HepG2 (cell line): ENCODE measurements at regions of chr2 and their contacts with region 1.

Region 1: DNA sequence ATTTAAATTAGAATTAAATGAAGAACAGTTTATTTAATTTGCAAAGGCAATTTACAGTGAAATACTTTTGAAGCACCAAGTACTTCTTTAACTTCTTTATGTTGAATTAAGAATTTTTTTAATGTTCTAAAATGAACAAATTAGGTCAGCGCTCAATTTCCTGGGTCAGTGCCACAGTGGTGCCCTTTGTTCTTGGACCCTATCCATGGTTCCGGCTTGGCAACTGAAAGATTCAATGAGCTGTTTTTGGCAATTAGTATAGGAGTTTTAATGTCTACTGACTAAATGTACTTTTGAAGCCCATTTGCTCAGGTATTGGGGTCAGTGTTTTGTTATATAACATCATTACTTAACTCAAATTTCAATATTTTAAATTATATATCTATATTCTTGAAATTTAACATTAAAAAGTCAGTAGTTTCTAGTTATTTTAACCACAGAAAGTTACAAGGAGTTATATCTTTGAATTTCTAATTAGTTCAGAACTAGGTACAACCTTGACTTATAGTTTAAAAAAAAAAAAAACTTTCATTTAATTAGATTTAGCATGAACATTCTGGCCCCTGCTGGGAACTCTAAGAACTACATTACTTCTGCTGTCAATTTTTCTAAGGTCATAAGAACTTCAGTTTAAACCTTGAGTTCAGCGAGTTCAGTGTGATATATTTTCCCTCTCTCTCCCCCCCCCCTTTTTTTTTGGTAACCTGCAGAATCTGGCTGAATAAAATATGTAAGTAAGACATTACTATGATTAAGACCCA is 7.6 kb upstream of the MSTN start:
- DNase-seq: peak; percentile 68
- ATAC-seq: peak; percentile 44
- H3K4me3 ChIP-seq: no peak overlapping the region
- H3K27ac ChIP-seq: no peak overlapping the region
- H3K4me1 ChIP-seq: no peaks in the 10 kb centered on the region
- H3K27me3 ChIP-seq: no peaks in the 10 kb centered on the region
- CTCF ChIP-seq: peak; percentile 58
- EP300 ChIP-seq: no peak
- POLR2A ChIP-seq: no peak
- RAD21 ChIP-seq: no peak

Region 2: GRCh38 chr2:189751080-189751658 is 318.9 kb before region 1 on chr2:
- CTCF ChIA-PET with region 1: interaction called, 17 read pairs
- POLR2A ChIA-PET with region 1: no interaction called
- in situ Hi-C with region 1: loop called (anchors 10 kb)
- intact Hi-C with region 1: loop called (anchors 1 kb)
- DNase-seq: peak; percentile 54
- ATAC-seq: peak; percentile 98
- H3K4me3 ChIP-seq: no peak overlapping the region
- H3K27ac ChIP-seq: no peak overlapping the region
- H3K4me1 ChIP-seq: no peaks in the 10 kb centered on the region
- H3K27me3 ChIP-seq: no peaks in the 10 kb centered on the region
- CTCF ChIP-seq: peak; percentile 84
- EP300 ChIP-seq: 0 out of 4 replicates have a peak, but pooled peaks of 1 of the 2 experiments have one; percentile 8
- POLR2A ChIP-seq: no peak
- RAD21 ChIP-seq: 0 out of 2 replicates have a peak, but pooled peaks have one; percentile 14

Region 3: GRCh38 chr2:189798312-189799029 is 271.6 kb before region 1 on chr2:
- CTCF ChIA-PET with region 1: no interaction called
- POLR2A ChIA-PET with region 1: no interaction called
- in situ Hi-C with region 1: loop called (anchors 10 kb)
- intact Hi-C with region 1: loop called (anchors 2 kb)
- DNase-seq: peak; percentile 24
- ATAC-seq: peak; percentile 72
- H3K4me3 ChIP-seq: no peak overlapping the region
- H3K27ac ChIP-seq: no peak overlapping the region
- H3K4me1 ChIP-seq: no peaks in the 10 kb centered on the region
- H3K27me3 ChIP-seq: no peaks in the 10 kb centered on the region
- CTCF ChIP-seq: peak; percentile 47
- EP300 ChIP-seq: no peak
- POLR2A ChIP-seq: no peak
- RAD21 ChIP-seq: no peak

Region 4: GRCh38 chr2:189982777-189983394 is 87.2 kb before region 1 on chr2:
- CTCF ChIA-PET with region 1: no interaction called
- POLR2A ChIA-PET with region 1: no interaction called
- in situ Hi-C with region 1: no loop called
- intact Hi-C with region 1: loop called (anchors 1 kb)
- DNase-seq: peak; percentile 35
- ATAC-seq: peak; percentile 89
- H3K4me3 ChIP-seq: no peak overlapping the region
- H3K27ac ChIP-seq: no peak overlapping the region
- H3K4me1 ChIP-seq: no peaks in the 10 kb centered on the region
- H3K27me3 ChIP-seq: no peaks in the 10 kb centered on the region
- CTCF ChIP-seq: peak; percentile 73
- EP300 ChIP-seq: no peak
- POLR2A ChIP-seq: no peak
- RAD21 ChIP-seq: peak; percentile 28; the same call in 1 of the 2 replicates

Region 5: DNA sequence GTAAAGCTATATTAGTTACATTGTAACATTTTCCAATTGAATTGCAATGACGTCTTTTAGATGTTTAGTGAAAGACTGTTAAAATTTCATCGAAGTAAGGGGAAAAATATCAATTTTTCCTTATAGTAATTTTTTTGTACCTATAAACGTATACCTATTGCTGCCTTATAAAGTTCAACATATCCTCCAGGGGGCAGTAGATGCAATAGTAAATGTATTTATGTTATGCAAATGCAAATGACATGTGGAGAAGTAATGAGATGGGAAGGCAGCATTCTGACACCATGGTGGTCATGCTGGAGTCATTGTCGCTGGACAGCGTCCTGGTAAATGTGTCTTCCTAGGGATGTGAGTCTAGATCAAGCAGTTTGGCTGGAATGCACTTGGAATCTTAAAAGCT is 46.3 kb before region 1 on chr2:
- CTCF ChIA-PET with region 1: interaction called, 8 read pairs
- POLR2A ChIA-PET with region 1: no interaction called
- in situ Hi-C with region 1: no loop called
- intact Hi-C with region 1: loop called (anchors 5 kb)
- DNase-seq: peak; percentile 57
- ATAC-seq: peak; percentile 83
- H3K4me3 ChIP-seq: no peak overlapping the region
- H3K27ac ChIP-seq: no peak overlapping the region
- H3K4me1 ChIP-seq: no peaks in the 10 kb centered on the region
- H3K27me3 ChIP-seq: no peaks in the 10 kb centered on the region
- CTCF ChIP-seq: peak; percentile 40
- EP300 ChIP-seq: no peak
- POLR2A ChIP-seq: no peak
- RAD21 ChIP-seq: no peak